ENCODE measurements at regions of chr12 and their contacts with region 1.

Region 1: GRCh38 chr12:120710031-120710804 is at the start of gene UNC119B:
- DNase-seq: peak; percentile 67 to 85
- ATAC-seq: peak; percentile 89 to 92 (median 91)
- H3K4me3 ChIP-seq: peak within 1 kb of the TSS; percentile 56
- H3K4me3 Mint-ChIP-seq: peak within 1 kb of the TSS; percentile 90
- H3K27ac ChIP-seq: peak within 1 kb of the TSS; percentile 39
- H3K27ac Mint-ChIP-seq: peak within 1 kb of the TSS; percentile 71 to 87
- H3K4me1 ChIP-seq: peaks cover 22% of the 10 kb centered on the region
- H3K4me1 Mint-ChIP-seq: peaks cover 25 to 27% of the 10 kb centered on the region in 2 donors
- H3K27me3 ChIP-seq: no peaks in the 10 kb centered on the region
- H3K27me3 Mint-ChIP-seq: no peaks in the 10 kb centered on the region
- CTCF ChIP-seq: no peak
- total RNA-seq, gene UNC119B: 10.7 to 11.6 (median 11.6) TPM

Region 2: GRCh38 chr12:120356567-120357030 is 353.6 kb before region 1 on chr12:
- intact Hi-C with region 1: loop called (anchors 5 kb)
- DNase-seq: peak; percentile 71 to 82
- ATAC-seq: peak; percentile 78 to 97 (median 94)
- H3K4me3 ChIP-seq: no peak overlapping the region
- H3K4me3 Mint-ChIP-seq: no peak overlapping the region
- H3K27ac ChIP-seq: no peak overlapping the region
- H3K27ac Mint-ChIP-seq: no peak overlapping the region
- H3K4me1 ChIP-seq: no peaks in the 10 kb centered on the region
- H3K4me1 Mint-ChIP-seq: peaks cover 0 to under 1% of the 10 kb centered on the region in 2 donors
- H3K27me3 ChIP-seq: peaks cover 5% of the 10 kb centered on the region
- H3K27me3 Mint-ChIP-seq: peaks cover 0 to 25% of the 10 kb centered on the region in 2 donors
- CTCF ChIP-seq: peak; percentile 89

Region 3: DNA sequence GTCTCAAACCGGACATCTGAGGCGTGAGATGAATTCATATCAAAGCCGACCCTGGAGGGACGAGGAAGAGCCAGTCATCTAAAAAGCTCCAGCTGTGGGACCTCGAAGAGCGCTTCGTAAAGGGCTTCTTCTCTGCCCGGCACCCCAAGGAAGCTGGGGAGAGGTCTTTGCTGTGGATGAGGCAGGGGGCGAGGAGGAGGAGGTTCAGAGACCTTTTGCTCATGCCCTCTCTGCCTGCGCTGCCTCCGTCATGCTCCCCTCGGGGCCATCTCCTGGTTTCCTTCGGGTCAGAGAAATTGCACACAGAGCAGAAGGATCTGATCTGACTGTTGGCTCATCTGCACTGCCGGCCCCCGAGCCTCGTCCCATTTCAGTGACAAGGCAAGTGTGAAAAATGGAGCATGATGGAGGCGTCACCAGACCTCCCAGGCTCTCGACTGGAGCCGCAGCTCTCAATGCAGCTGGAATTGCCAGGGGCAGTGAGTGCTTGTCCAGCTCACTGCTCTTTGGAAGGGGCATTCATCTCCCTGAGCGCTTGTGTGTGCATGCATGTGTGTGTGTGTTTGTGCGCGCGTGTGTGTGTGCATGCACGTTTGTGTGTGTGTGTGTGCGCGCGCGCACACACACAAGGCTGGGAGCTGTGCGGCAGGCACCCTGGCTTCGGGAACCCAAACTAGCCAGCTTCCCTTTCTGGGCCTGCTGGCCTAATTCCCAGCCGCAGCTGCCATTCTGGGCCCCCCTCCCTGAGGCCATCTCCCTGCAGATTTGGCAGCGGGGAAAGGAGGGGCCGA is 60.6 kb before region 1 on chr12:
- intact Hi-C with region 1: loop called (anchors 1 kb)
- DNase-seq: no peak
- ATAC-seq: no peak
- H3K4me3 ChIP-seq: no peak overlapping the region
- H3K4me3 Mint-ChIP-seq: no peak overlapping the region
- H3K27ac ChIP-seq: no peak overlapping the region
- H3K27ac Mint-ChIP-seq: no peak overlapping the region
- H3K4me1 ChIP-seq: peaks cover 11% of the 10 kb centered on the region
- H3K4me1 Mint-ChIP-seq: peaks cover 12 to 14% of the 10 kb centered on the region in 2 donors
- H3K27me3 ChIP-seq: peaks cover 8% of the 10 kb centered on the region
- H3K27me3 Mint-ChIP-seq: peaks cover 36% of the 10 kb centered on the region in 2 donors
- CTCF ChIP-seq: peak; percentile 27

Region 4: GRCh38 chr12:120686690-120687577 is 23.3 kb before region 1 on chr12 and contains the start of gene MLEC:
- intact Hi-C with region 1: loop called (anchors 2 kb)
- DNase-seq: peak; percentile 99
- ATAC-seq: peak; percentile 82 to 92 (median 83)
- H3K4me3 ChIP-seq: peak within 1 kb of the TSS; percentile 58
- H3K4me3 Mint-ChIP-seq: peak within 1 kb of the TSS; percentile 93
- H3K27ac ChIP-seq: peak within 1 kb of the TSS; percentile 80
- H3K27ac Mint-ChIP-seq: peak within 1 kb of the TSS; percentile 90
- H3K4me1 ChIP-seq: peaks cover 40% of the 10 kb centered on the region
- H3K4me1 Mint-ChIP-seq: peaks cover 34 to 42% of the 10 kb centered on the region in 2 donors
- H3K27me3 ChIP-seq: no peaks in the 10 kb centered on the region
- H3K27me3 Mint-ChIP-seq: no peaks in the 10 kb centered on the region
- CTCF ChIP-seq: no peak
- total RNA-seq, gene MLEC: 47.4 to 52.8 (median 49.6) TPM